MCF 10A (cell line): ENCODE measurements at regions of chr18 and their contacts with region 1.

Region 1: DNA sequence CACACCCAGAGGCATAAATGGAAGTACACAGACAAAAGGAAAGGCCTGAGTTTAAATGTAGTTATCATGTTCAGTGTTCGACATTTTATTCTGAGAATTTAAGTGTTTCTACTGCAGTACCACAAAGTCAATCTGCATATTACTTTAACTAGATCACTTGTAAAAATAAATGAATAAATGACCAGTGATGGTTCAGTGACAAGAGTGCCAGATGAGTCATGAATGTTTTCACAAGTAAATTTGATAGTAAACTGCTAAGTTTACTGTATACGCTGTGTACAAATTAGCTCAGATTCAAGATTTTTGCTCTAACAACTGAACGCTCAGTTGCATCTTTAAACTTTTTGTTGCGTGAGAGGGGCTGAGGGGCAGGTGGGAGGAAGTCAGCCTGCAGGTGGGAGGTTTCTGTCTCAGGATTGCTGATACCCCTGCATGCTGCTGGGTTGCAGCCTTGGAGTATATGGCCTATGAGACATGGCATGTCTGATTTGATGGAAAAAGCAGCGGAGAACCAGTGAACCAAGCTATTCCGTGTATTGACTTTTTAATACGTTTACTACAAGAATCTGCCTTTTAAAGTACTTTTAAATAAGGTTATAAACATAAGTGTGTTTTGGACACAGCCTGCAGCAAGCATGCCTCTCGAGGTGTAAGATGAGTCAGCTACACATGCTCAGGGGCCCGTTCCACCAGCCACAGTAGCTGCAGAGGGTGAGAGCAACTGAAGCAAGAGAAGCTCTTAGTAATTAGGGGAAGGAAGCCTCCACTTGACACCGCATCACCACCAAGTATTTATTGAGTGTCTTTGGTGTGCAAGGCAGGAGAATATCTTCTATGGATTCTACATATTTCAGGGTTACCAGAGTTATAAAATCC is 245.1 kb downstream of the NEDD4L start:
- DNase-seq: peak; percentile 80
- H3K4me3 Mint-ChIP-seq: peak overlapping the region; percentile 29
- H3K27ac Mint-ChIP-seq: peak overlapping the region; percentile 94
- H3K4me1 Mint-ChIP-seq: peaks cover 55% of the 10 kb centered on the region
- H3K27me3 Mint-ChIP-seq: no peaks in the 10 kb centered on the region
- CTCF ChIP-seq: no peak

Region 2: DNA sequence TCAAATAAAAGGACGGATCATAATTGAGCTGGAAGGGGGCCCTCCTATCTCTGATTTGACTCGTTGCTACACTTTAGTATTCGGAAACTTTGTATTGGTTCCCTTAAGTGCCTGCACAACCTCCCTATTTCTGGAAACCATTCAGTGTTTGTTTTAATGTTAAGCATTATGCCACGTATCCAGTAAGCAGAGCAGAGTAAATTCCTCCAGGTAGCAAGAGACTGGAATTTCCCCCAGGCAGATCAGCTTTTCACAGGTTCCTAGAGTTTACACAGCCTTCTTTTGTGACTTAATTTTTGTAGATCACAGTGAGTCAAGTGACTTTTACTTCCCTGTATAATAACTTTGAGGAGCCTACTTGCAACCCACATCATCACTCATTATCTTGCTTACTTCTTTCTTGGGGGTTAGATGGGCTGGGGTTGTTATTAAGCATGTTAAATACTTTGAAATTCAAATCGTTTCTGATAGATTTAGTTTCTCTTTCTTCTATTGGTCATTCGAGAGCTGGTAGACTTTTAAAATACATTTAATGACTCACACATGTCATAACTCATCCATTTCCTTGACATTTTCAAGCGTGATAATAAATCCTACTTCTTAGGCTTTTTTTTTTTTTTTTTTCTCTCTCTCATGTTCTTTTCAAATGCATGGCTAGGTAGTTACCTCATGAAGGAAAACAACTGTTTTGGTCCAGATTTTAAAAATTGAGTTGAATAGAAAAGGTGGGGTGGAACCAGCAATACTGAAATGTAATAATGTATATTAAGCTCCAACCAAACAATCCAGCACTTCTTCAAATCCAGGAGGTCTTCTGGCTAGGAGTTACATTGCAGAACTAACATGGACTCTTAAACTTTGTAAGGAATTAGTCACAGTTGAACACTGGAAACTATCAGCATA is 25.9 kb before region 1 on chr18:
- CTCF ChIA-PET with region 1: interaction called, 4 read pairs
- POLR2A ChIA-PET with region 1: interaction called, 71 read pairs
- intact Hi-C with region 1: no loop called
- DNase-seq: peak; percentile 56
- H3K4me3 Mint-ChIP-seq: peak overlapping the region; percentile 77
- H3K27ac Mint-ChIP-seq: peak overlapping the region; percentile 86
- H3K4me1 Mint-ChIP-seq: peaks cover 33% of the 10 kb centered on the region
- H3K27me3 Mint-ChIP-seq: no peaks in the 10 kb centered on the region
- CTCF ChIP-seq: no peak

Region 3: GRCh38 chr18:58268849-58269248 is 20.3 kb before region 1 on chr18:
- CTCF ChIA-PET with region 1: interaction called, 4 read pairs
- POLR2A ChIA-PET with region 1: interaction called, 71 read pairs
- intact Hi-C with region 1: no loop called
- DNase-seq: peak; percentile 81
- H3K4me3 Mint-ChIP-seq: peak overlapping the region; percentile 26
- H3K27ac Mint-ChIP-seq: peak overlapping the region; percentile 69
- H3K4me1 Mint-ChIP-seq: peaks cover 45% of the 10 kb centered on the region
- H3K27me3 Mint-ChIP-seq: no peaks in the 10 kb centered on the region
- CTCF ChIP-seq: no peak

Region 4: DNA sequence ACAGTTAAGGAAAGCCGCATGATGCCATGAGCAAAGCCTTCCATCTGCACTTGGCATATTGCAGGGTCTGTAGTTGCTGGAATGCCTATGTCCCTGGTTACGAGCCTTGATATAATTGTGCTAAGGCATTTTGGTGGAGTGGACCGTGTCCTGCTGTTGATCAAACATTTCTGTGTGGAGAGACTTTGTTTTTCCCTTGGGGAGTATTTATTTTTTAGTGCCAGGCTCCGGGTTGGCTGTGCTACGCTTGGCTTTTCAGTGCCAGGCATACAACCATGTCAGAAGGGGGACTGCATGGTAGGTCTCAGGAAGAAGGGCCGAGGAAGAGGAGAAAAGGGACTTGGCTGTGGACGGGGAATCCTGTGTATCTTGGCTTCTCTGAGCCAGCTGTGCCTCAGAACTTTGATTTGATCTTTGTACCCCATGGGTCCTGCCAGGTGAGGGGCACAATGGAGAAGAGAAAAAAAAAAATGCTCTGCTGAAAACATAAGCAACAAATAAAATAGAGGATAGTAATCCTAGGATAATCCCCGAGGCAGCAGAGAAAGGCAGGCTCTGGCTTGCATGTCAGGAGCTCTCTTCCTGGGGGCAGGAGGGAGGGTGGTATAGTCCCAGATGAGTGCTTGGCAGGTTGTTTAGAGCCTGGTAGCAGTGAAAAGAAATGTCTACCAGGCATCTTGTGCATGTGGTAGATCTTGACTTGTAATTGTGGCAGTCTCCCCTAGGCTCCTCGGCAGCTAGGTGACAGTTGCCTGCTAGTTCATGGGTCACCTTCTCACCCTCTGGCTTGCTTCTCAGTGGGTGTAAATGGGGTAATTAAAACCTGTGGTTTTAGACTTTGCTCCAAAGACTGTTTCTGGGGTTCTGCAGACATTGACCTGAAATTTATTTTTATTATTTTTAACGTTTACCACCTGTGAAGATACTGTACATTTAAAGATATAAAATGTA is 12.1 kb before region 1 on chr18:
- CTCF ChIA-PET with region 1: interaction called, 3 read pairs
- POLR2A ChIA-PET with region 1: interaction called, 71 read pairs
- intact Hi-C with region 1: no loop called
- DNase-seq: peak; percentile 44
- H3K4me3 Mint-ChIP-seq: no peak overlapping the region
- H3K27ac Mint-ChIP-seq: peak overlapping the region; percentile 53
- H3K4me1 Mint-ChIP-seq: peaks cover 28% of the 10 kb centered on the region
- H3K27me3 Mint-ChIP-seq: no peaks in the 10 kb centered on the region
- CTCF ChIP-seq: no peak

Region 5: DNA sequence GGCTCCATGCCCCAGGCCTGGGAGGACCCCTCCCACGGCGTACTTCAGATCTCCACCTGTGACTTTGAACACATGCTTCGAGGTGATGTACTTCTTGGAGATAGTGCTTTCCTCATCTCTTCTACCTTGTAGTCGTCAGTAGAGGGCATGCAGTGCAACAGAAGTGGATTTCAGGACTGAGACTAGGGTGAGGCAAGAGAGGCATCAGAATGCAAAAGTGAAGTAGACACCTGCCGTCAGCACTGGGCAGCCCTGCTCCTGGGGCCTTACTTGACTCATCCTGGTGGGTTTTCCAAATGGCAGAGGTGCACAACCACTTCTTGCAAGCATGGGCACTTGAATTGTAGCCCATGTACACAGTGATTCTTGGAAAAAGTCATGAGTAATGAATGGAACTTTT is 13.7 kb after region 1 on chr18:
- CTCF ChIA-PET with region 1: interaction called, 8 read pairs
- POLR2A ChIA-PET with region 1: interaction called, 378 read pairs
- intact Hi-C with region 1: no loop called
- DNase-seq: no peak
- H3K4me3 Mint-ChIP-seq: no peak overlapping the region
- H3K27ac Mint-ChIP-seq: no peak overlapping the region
- H3K4me1 Mint-ChIP-seq: peaks cover 15% of the 10 kb centered on the region
- H3K27me3 Mint-ChIP-seq: no peaks in the 10 kb centered on the region
- CTCF ChIP-seq: no peak